Gastrocnemius medialis (tissue), 4 donors: ENCODE measurements at regions of chr10 and their contacts with region 1.

Region 1: DNA sequence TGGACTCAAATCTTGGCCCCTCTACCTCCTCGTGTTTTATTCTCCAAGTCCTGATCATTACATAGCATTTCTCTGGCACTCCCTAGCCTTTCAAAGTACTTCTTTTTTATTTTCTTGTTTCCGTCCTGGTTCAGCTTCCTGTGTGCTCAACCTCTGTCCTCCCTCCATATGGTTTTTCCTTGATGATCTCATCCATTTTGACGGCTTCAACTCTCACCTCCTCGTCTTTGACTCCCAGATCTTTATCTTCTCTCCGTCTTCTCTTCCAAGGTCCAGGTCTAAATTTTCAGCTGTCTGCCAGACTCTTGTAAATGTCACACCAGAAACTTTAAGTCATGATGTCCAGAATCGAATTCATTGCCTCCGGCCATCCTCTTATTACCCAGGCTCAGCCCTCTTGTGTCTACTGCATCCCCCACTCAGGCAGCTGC is 23.3 kb upstream of the GFRA1 start:
- DNase-seq: no peak
- ATAC-seq: no peak
- H3K4me3 ChIP-seq: no peak overlapping the region
- H3K27ac ChIP-seq: no peak overlapping the region
- H3K4me1 ChIP-seq: no peaks in the 10 kb centered on the region
- H3K27me3 ChIP-seq: no peaks in the 10 kb centered on the region
- CTCF ChIP-seq: no peak
- POLR2A ChIP-seq: no peak

Region 2: GRCh38 chr10:115706026-115706781 is 590.1 kb before region 1 on chr10:
- in situ Hi-C with region 1: loop called in 1 of 4 experiments (anchors 10 kb)
- intact Hi-C with region 1: no loop called
- DNase-seq: no peak
- ATAC-seq: no peak
- H3K4me3 ChIP-seq: no peak overlapping the region
- H3K27ac ChIP-seq: no peak overlapping the region
- H3K4me1 ChIP-seq: no peaks in the 10 kb centered on the region
- H3K27me3 ChIP-seq: no peaks in the 10 kb centered on the region
- CTCF ChIP-seq: no peak
- POLR2A ChIP-seq: no peak

Region 3: DNA sequence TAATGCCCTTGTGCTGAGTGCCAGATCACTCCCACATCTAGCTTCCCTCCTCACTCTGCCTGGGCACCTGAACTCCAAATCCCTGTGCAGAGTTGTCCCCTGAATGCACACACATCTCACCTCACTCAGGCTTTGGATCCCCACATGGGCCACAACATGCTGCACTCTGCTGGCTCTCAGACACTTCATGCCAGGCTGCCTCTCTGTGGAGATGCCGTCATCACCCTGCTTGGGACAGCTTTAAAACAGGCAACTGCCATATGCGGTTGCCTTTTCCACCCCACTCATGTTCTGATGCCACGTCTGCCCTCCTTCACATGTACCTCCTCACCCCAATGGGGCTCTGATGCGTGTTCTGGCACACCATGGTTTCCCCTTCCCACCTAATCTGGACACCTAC is 500.3 kb before region 1 on chr10:
- in situ Hi-C with region 1: loop called in 2 of 4 experiments (anchors 5 to 25 kb)
- intact Hi-C with region 1: no loop called
- DNase-seq: no peak
- ATAC-seq: no peak
- H3K4me3 ChIP-seq: no peak overlapping the region
- H3K27ac ChIP-seq: no peak overlapping the region
- H3K4me1 ChIP-seq: no peaks in the 10 kb centered on the region
- H3K27me3 ChIP-seq: no peaks in the 10 kb centered on the region
- CTCF ChIP-seq: no peak
- POLR2A ChIP-seq: no peak